ENCODE measurements at regions of chr6 and their contacts with region 1.

Region 1: GRCh38 chr6:34745277-34746103 is 11.8 kb upstream of the SNRPC start:
- DNase-seq: no peak

Region 2: GRCh38 chr6:34696739-34697543 is 48.5 kb before region 1 on chr6 and contains the start of gene ILRUN:
- intact Hi-C with region 1: loop called in 1 of 2 experiments (anchors 1 kb)
- DNase-seq: peak; percentile 99
- total RNA-seq, gene ILRUN: 74.0 to 83.4 TPM